MCF 10A (cell line): ENCODE measurements at regions of chr12 and their contacts with region 1.

Region 1: DNA sequence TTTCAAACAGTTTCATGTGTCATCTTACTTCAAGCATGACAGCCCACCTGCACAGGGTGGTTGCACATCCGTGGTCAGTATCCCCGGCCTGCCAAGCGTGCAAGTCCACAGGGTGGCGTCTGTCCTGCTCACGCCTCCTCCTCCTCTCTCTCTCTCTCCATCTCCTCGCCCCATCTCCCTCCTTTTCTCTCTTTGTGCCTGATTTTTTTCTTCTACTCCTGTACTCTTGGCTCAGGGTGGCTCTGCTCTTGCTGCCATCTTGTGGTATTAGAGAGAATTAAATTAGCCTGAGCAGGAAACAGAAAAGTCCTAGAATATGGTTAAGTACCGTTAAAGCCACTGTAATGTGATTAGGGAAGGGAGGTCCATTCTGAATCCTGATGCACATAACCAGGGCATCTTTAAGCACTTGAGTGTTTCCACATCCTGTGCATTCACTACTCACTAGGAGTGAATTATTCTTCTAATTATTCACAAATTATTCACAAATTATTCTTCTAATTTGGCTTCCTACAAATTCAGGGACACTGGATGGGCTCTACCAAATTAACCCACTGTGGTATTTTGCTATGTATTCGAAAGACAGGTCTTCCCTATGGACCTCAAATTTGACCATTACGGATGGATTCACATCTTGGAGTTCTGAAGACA is 25.5 kb upstream of the DTX1 start:
- DNase-seq: peak; percentile 75
- H3K4me3 Mint-ChIP-seq: no peak overlapping the region
- H3K27ac Mint-ChIP-seq: no peak overlapping the region
- H3K4me1 Mint-ChIP-seq: peaks cover 6% of the 10 kb centered on the region
- H3K27me3 Mint-ChIP-seq: no peaks in the 10 kb centered on the region
- CTCF ChIP-seq: peak; percentile 55

Region 2: GRCh38 chr12:112850383-112850782 is 180.6 kb before region 1 on chr12:
- CTCF ChIA-PET with region 1: no interaction called
- POLR2A ChIA-PET with region 1: no interaction called
- intact Hi-C with region 1: no loop called
- DNase-seq: no peak
- H3K4me3 Mint-ChIP-seq: no peak overlapping the region
- H3K27ac Mint-ChIP-seq: no peak overlapping the region
- H3K4me1 Mint-ChIP-seq: no peaks in the 10 kb centered on the region
- H3K27me3 Mint-ChIP-seq: peaks cover 64% of the 10 kb centered on the region
- CTCF ChIP-seq: no peak

Region 3: GRCh38 chr12:112900299-112901145 is 130.5 kb before region 1 on chr12:
- CTCF ChIA-PET with region 1: interaction called, 24 read pairs
- POLR2A ChIA-PET with region 1: no interaction called
- intact Hi-C with region 1: loop called (anchors 1 kb)
- DNase-seq: peak; percentile 74
- H3K4me3 Mint-ChIP-seq: no peak overlapping the region
- H3K27ac Mint-ChIP-seq: no peak overlapping the region
- H3K4me1 Mint-ChIP-seq: peaks cover 33% of the 10 kb centered on the region
- H3K27me3 Mint-ChIP-seq: peaks cover 28% of the 10 kb centered on the region
- CTCF ChIP-seq: peak; percentile 64

Region 4: DNA sequence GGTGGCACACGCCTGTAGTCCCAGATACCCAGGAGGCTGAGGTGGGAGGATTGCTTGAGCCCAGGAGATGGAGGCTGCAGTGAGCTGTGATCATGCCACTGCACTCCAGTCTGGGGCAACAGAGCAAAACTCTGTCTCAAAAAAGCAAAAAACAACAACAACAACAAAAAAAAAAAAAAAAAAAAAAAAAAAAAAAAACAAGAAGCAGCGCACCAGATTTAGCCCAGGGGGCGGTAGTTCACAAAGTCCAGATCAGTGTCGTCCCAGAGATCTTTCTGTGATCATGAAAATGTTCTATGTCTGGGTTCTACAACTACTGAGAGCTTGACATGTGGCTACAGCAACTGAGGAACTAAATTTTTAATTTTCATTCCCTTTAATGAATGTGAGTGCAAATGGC is 25.2 kb before region 1 on chr12:
- CTCF ChIA-PET with region 1: interaction called, 20 read pairs
- POLR2A ChIA-PET with region 1: interaction called, 4 read pairs
- intact Hi-C with region 1: no loop called
- DNase-seq: peak; percentile 46
- H3K4me3 Mint-ChIP-seq: no peak overlapping the region
- H3K27ac Mint-ChIP-seq: no peak overlapping the region
- H3K4me1 Mint-ChIP-seq: peaks cover 7% of the 10 kb centered on the region
- H3K27me3 Mint-ChIP-seq: no peaks in the 10 kb centered on the region
- CTCF ChIP-seq: peak; percentile 31

Region 5: GRCh38 chr12:113019041-113019440 is 12.0 kb before region 1 on chr12:
- CTCF ChIA-PET with region 1: interaction called, 10 read pairs
- POLR2A ChIA-PET with region 1: no interaction called
- intact Hi-C with region 1: no loop called
- DNase-seq: peak; percentile 39
- H3K4me3 Mint-ChIP-seq: no peak overlapping the region
- H3K27ac Mint-ChIP-seq: no peak overlapping the region
- H3K4me1 Mint-ChIP-seq: peaks cover 17% of the 10 kb centered on the region
- H3K27me3 Mint-ChIP-seq: no peaks in the 10 kb centered on the region
- CTCF ChIP-seq: no peak